Activated CD4-positive, alpha-beta memory T cell treated with anti-CD3 and anti-CD28 coated beads, Interleukin-2, amount 10 ng/mL, durations not matched to agents 7 days and 5 days (primary cell): ENCODE measurements at regions of chr7 and their contacts with region 1.

Region 1: GRCh38 chr7:100101016-100101862 is at the starts of genes AP4M1 and MCM7:
- DNase-seq: peak; percentile 99
- H3K4me3 Mint-ChIP-seq: peak within 1 kb of the TSS; percentile 84
- H3K27ac Mint-ChIP-seq: peak within 1 kb of the TSS; percentile 90
- H3K4me1 Mint-ChIP-seq: peaks cover 42% of the 10 kb centered on the region
- H3K27me3 Mint-ChIP-seq: no peaks in the 10 kb centered on the region
- total RNA-seq, gene AP4M1: 10.6 to 15.2 TPM
- total RNA-seq, gene MCM7: 266 to 273 TPM

Region 2: GRCh38 chr7:99624484-99624883 is 476.8 kb before region 1 on chr7:
- CTCF ChIA-PET with region 1: no interaction called
- POLR2A ChIA-PET with region 1: no interaction called
- DNase-seq: peak; percentile 83
- H3K4me3 Mint-ChIP-seq: peak overlapping the region; percentile 73
- H3K27ac Mint-ChIP-seq: peak overlapping the region; percentile 85
- H3K4me1 Mint-ChIP-seq: peaks cover 56% of the 10 kb centered on the region
- H3K27me3 Mint-ChIP-seq: no peaks in the 10 kb centered on the region

Region 3: DNA sequence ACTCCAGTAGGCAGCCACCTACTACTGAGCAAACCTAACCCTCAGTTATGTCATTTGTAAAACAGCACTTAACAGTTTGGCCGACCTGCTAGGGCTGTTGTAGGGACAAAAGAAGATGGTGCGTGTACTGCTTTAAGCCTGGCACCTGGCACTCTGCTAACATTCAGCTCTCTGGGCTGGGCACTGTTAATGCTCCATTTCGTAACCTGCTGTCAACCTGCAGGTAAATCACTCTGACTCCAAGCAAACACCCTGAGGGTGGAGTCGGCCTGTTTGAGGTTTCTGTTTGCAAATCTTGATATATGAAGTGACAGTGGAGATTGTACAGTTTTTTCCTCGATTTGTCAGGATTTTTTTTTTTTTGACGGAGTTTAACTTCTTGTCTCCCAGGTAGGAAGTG is 78.6 kb before region 1 on chr7:
- CTCF ChIA-PET with region 1: interaction called, 6 read pairs
- POLR2A ChIA-PET with region 1: interaction called, 11 read pairs
- DNase-seq: no peak
- H3K4me3 Mint-ChIP-seq: no peak overlapping the region
- H3K27ac Mint-ChIP-seq: no peak overlapping the region
- H3K4me1 Mint-ChIP-seq: peaks cover 40% of the 10 kb centered on the region
- H3K27me3 Mint-ChIP-seq: no peaks in the 10 kb centered on the region

Region 4: GRCh38 chr7:100033526-100033925 is 67.7 kb before region 1 on chr7:
- CTCF ChIA-PET with region 1: no interaction called
- POLR2A ChIA-PET with region 1: no interaction called
- DNase-seq: no peak
- H3K4me3 Mint-ChIP-seq: no peak overlapping the region
- H3K27ac Mint-ChIP-seq: no peak overlapping the region
- H3K4me1 Mint-ChIP-seq: no peaks in the 10 kb centered on the region
- H3K27me3 Mint-ChIP-seq: no peaks in the 10 kb centered on the region

Region 5: GRCh38 chr7:100081535-100082102 is 19.6 kb before region 1 on chr7 and contains the start of gene ZNF3:
- CTCF ChIA-PET with region 1: interaction called, 21 read pairs
- POLR2A ChIA-PET with region 1: interaction called, 169 read pairs
- DNase-seq: peak; percentile 98
- H3K4me3 Mint-ChIP-seq: peak within 1 kb of the TSS; percentile 81
- H3K27ac Mint-ChIP-seq: peak within 1 kb of the TSS; percentile 79
- H3K4me1 Mint-ChIP-seq: peaks cover 33% of the 10 kb centered on the region
- H3K27me3 Mint-ChIP-seq: peaks cover 3% of the 10 kb centered on the region
- total RNA-seq, gene ZNF3: 21.1 to 22.1 TPM

Region 6: DNA sequence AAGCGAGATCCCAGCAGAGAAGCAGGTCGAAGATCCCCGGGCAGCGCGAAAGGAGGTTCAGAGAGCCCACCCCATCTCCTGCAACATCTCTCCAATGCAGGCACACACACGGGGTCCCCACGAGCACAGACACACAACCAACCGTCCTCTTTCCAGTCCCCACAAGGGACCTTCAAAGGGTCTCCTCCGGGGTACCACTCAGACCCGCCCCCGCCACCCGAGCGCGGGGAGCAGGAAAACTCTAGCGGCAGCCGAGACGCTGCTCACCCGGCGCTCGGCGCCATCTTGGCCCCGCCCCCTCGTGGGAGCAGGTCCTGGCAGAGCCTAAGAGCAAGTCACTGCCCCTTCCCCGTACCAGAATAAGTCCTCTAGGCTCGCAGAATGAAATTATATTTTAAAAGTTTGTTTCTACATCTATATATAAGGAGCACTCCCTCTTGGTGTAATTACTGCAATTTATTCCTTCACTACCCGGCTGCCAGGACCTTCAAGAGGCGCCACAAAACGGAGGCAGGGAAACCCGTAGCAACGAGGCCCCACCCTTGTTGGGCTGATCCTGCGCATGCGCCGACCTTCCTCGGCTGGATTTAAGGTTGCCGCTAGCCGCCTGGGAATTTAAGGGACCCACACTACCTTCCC is 17.9 kb after region 1 on chr7 and contains the starts of genes CNPY4 and TAF6:
- CTCF ChIA-PET with region 1: interaction called, 15 read pairs
- POLR2A ChIA-PET with region 1: interaction called, 81 read pairs
- DNase-seq: peak; percentile 94
- H3K4me3 Mint-ChIP-seq: peak within 1 kb of the TSS; percentile 86
- H3K27ac Mint-ChIP-seq: peak within 1 kb of the TSS; percentile 82
- H3K4me1 Mint-ChIP-seq: peaks cover 30% of the 10 kb centered on the region
- H3K27me3 Mint-ChIP-seq: no peaks in the 10 kb centered on the region
- total RNA-seq, gene CNPY4: 31.3 to 32.5 TPM
- total RNA-seq, gene TAF6: 54.6 to 56.5 TPM